ENCODE measurements at regions of chr2 and their contacts with region 1.

Region 1: DNA sequence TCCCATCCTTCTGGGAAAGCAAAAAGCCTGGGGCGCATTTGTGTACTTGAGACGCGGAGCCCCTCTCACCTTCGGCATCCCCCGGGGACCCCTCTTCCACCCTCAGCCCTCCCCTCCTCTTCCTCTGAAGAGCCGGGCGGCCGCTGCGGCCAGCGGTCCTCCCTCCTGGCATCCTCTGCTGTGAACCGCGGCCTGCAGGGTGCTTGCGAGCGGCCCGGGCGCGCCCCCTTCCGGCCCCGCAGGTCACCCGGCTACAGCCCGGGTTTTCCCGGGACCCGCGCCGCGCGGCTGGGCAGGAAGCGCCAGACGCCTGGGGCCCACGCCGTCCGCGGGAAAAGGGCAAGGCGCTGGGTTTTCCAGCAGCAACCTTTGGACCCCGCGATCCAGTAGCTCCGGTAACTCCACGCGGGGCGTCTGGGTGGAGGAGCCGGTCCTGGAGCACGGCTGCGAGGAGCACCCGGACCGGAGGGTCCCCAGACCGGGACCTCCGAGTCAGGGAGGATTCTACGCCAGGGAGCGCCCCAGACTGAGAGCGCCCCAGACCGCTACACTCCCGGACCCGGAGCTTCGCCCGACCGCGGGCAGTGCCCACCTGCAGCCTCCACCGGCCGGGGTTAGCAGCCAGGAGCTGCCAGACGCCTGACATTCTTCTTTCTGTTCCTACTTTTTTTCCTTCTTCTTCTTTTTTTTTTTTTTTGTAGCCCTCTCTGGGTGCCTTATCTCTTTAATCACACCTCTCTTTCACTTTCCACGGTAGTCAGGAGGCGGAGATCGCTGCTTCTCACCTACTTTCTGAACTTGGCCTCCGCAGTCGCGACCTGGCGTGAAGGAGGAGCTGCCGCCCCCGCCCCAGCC is at the start of gene IL18R1:
- DNase-seq: peak; percentile 81
- ATAC-seq: peak; percentile 92
- H3K4me3 Mint-ChIP-seq: peak within 1 kb of the TSS; percentile 100
- H3K27ac Mint-ChIP-seq: peak within 1 kb of the TSS; percentile 96
- H3K4me1 Mint-ChIP-seq: peaks cover 54% of the 10 kb centered on the region
- H3K27me3 Mint-ChIP-seq: no peaks in the 10 kb centered on the region
- total RNA-seq, gene IL18R1: 50.2 to 53.1 TPM

Region 2: GRCh38 chr2:102366406-102367112 is 10.8 kb after region 1 on chr2:
- CTCF ChIA-PET with region 1: interaction called, 11 read pairs
- POLR2A ChIA-PET with region 1: interaction called, 3 read pairs
- DNase-seq: no peak
- ATAC-seq: peak; percentile 34
- H3K4me3 Mint-ChIP-seq: peak overlapping the region; percentile 54
- H3K27ac Mint-ChIP-seq: peak overlapping the region; percentile 88
- H3K4me1 Mint-ChIP-seq: peaks cover 59% of the 10 kb centered on the region
- H3K27me3 Mint-ChIP-seq: no peaks in the 10 kb centered on the region

Region 3: GRCh38 chr2:102418421-102418961 is 62.7 kb after region 1 on chr2:
- CTCF ChIA-PET with region 1: interaction called, 11 read pairs
- POLR2A ChIA-PET with region 1: interaction called, 3 read pairs
- DNase-seq: peak; percentile 46
- ATAC-seq: peak; percentile 78
- H3K4me3 Mint-ChIP-seq: peak overlapping the region; percentile 84
- H3K27ac Mint-ChIP-seq: peak overlapping the region; percentile 96
- H3K4me1 Mint-ChIP-seq: peaks cover 72% of the 10 kb centered on the region
- H3K27me3 Mint-ChIP-seq: no peaks in the 10 kb centered on the region